SK-MEL-5 (cell line): ENCODE measurements at regions of chr9 and their contacts with region 1.

Region 1: GRCh38 chr9:99954819-99955218 is 48.4 kb downstream of the STX17 start:
- DNase-seq: no peak

Region 2: DNA sequence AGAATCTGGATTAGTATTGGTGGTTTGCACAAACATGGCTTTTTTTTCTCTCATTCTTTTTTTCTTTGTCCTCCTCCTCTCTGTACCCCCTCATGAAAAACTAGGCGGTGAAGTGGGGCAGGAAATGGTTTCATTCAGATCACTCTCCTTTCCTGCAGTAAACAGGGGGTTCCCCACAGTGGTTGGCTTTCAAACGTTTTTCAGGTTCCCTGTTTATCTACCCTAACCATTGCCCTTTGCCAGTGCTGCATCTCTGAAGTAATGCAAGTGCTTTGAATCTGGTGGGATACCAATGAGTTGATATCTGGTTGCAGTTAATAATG is 103.4 kb before region 1 on chr9:
- in situ Hi-C with region 1: loop called (anchors 10 kb)
- DNase-seq: no peak

Region 3: GRCh38 chr9:100087218-100087617 is 132.4 kb after region 1 on chr9:
- in situ Hi-C with region 1: no loop called
- DNase-seq: no peak